SK-N-SH (cell line): ENCODE measurements at regions of chr7 and their contacts with region 1.

Region 1: GRCh38 chr7:24812310-24812945 is 55.2 kb upstream of the GSDME start:
- DNase-seq: peak; percentile 67
- H3K4me3 ChIP-seq: no peak overlapping the region; a peak in 1 of 4 replicates
- H3K27ac ChIP-seq: no peak overlapping the region
- H3K4me1 ChIP-seq: peaks cover 0 to 4% of the 10 kb centered on the region in 2 experiments; a peak in 1 of 4 replicates
- H3K27me3 ChIP-seq: no peaks in the 10 kb centered on the region
- CTCF ChIP-seq: peak; percentile 100
- EP300 ChIP-seq: no peak
- RAD21 ChIP-seq: peak; percentile 75

Region 2: GRCh38 chr7:24709585-24710360 is 102.7 kb before region 1 on chr7:
- CTCF ChIA-PET with region 1: no interaction called
- POLR2A ChIA-PET with region 1: no interaction called
- DNase-seq: no peak
- H3K4me3 ChIP-seq: no peak overlapping the region
- H3K27ac ChIP-seq: no peak overlapping the region
- H3K4me1 ChIP-seq: no peaks in the 10 kb centered on the region
- H3K27me3 ChIP-seq: no peaks in the 10 kb centered on the region
- CTCF ChIP-seq: no peak
- EP300 ChIP-seq: no peak
- RAD21 ChIP-seq: no peak

Region 3: DNA sequence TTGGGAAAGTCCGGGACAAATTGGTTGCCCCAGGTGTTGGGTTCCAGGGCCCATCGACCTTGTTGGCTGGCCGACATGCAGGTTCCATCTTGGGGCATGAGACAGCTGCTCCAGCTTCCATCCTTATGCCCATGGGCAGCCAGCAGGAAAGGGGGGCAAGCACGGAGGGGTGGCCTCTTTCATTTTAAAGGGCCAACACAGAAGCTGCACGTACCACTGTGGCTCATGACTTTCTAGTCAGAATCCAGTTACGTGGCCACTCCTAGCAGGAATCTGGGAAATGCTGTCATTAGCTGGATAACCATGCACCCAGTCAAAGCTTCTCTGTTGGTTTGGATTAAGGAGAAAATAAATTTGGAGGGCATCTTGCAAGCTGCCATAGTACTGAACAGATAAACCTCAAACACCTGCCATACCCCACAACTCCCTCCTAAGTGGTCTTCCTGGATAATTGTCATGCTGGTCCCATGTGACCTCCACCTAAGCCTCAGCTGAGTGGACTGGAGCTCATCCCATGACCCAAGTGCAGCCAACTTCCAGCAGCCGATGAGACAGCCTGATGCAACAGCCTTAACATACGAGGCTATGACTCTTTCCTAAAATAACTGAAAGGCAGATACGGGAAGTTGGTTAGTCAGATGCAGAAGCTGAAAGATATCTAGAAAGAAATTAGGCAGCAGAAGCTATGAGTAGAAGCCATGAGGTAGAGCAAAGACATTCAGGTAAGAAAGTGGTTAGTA is 33.7 kb before region 1 on chr7:
- CTCF ChIA-PET with region 1: interaction called, 13 read pairs
- POLR2A ChIA-PET with region 1: no interaction called
- DNase-seq: no peak
- H3K4me3 ChIP-seq: no peak overlapping the region
- H3K27ac ChIP-seq: peak overlapping the region in 1 of 2 experiments; percentile 45; a peak in 2 of 4 replicates
- H3K4me1 ChIP-seq: peaks cover 0 to 8% of the 10 kb centered on the region in 2 experiments; a peak in 1 of 4 replicates
- H3K27me3 ChIP-seq: no peaks in the 10 kb centered on the region
- CTCF ChIP-seq: no peak
- EP300 ChIP-seq: no peak
- RAD21 ChIP-seq: no peak

Region 4: DNA sequence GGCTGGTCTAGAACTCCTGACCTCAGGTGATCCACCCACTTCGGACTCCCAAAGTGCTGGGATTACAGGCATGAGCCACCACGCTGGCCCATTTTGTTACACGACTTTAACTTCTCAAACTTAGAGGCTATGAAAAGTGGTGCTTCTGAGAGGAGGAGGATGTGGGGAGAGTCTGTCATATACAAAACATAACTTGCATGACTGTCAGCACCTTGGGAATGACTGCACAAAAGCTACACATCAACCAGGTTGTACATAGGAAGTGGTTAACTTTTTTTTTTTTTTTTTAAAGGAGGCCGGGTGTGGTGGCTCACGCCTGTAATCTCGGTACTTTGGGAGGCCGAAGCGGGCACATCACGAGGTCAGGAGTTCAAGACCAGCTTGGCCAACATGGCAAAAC is 11.8 kb before region 1 on chr7:
- CTCF ChIA-PET with region 1: interaction called, 70 read pairs
- POLR2A ChIA-PET with region 1: no interaction called
- DNase-seq: no peak
- H3K4me3 ChIP-seq: no peak overlapping the region
- H3K27ac ChIP-seq: no peak overlapping the region
- H3K4me1 ChIP-seq: no peaks in the 10 kb centered on the region
- H3K27me3 ChIP-seq: no peaks in the 10 kb centered on the region
- CTCF ChIP-seq: no peak
- EP300 ChIP-seq: no peak
- RAD21 ChIP-seq: no peak

Region 5: DNA sequence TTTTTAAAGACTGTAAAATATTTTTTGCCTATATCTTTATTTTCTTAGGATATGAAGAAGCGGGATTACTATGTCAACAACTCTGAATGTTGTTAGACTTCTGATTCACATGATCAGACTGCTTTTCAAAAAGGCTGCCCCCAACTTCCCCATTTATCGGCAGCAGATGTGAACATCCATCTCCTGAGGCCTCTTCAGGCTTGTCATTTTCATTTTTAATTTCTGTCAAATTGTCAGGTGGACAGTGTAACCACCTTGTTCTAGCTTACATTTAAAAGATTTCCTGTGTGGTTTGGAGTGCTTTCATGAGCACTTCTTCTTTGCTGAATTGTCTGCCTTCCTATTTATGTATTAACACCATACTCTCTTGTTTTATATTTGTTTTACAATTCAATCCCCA is 23.7 kb after region 1 on chr7:
- CTCF ChIA-PET with region 1: interaction called, 14 read pairs
- POLR2A ChIA-PET with region 1: no interaction called
- DNase-seq: no peak
- H3K4me3 ChIP-seq: no peak overlapping the region
- H3K27ac ChIP-seq: no peak overlapping the region
- H3K4me1 ChIP-seq: peaks cover 0 to 22% of the 10 kb centered on the region in 2 experiments; a peak in 3 of 4 replicates
- H3K27me3 ChIP-seq: no peaks in the 10 kb centered on the region
- CTCF ChIP-seq: no peak
- EP300 ChIP-seq: no peak
- RAD21 ChIP-seq: no peak

Region 6: GRCh38 chr7:24979863-24980533 is 167.6 kb after region 1 on chr7 and contains the start of gene OSBPL3:
- CTCF ChIA-PET with region 1: interaction called, 69 read pairs
- POLR2A ChIA-PET with region 1: no interaction called
- DNase-seq: peak; percentile 100
- H3K4me3 ChIP-seq: peak within 1 kb of the TSS; percentile 73 to 97
- H3K27ac ChIP-seq: peak within 1 kb of the TSS; percentile 84 to 87
- H3K4me1 ChIP-seq: peaks cover 21 to 28% of the 10 kb centered on the region in 2 experiments; a peak in 3 of 4 replicates
- H3K27me3 ChIP-seq: no peaks in the 10 kb centered on the region
- CTCF ChIP-seq: no peak
- EP300 ChIP-seq: peak in 1 of 2 experiments; percentile 2; a peak in 1 of 4 replicates
- RAD21 ChIP-seq: peak; percentile 38
- polyA plus RNA-seq, gene OSBPL3: 22.6 and 23.2 TPM in 2 replicates

Region 7: DNA sequence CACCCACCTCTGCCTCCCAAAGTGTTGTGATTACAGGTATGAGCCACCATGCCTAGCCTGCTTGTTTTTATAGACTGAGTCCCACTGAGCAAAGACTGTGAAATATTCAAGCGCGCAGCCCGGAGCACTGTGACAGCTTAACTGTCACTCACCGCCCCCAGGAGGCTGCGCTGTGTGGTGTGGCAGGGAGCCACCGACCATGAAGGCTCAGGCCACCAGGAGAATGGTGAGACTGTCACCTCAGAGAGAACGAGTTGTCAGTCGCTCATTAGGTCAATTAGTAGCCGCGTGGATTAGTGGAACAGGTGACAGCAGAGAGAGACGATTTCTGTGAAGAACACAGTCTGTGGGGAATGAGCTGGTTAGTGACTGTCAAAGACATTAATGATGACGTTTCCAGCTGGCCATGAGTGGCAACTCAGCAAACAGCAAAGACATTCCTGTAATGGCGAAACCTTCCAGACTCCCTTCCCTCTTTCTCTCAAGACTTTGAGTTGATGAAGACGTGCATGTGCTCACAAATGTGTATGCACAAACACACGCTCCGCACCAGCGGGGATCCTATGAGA is 248.1 kb after region 1 on chr7:
- CTCF ChIA-PET with region 1: interaction called, 42 read pairs
- POLR2A ChIA-PET with region 1: no interaction called
- DNase-seq: no peak
- H3K4me3 ChIP-seq: no peak overlapping the region
- H3K27ac ChIP-seq: no peak overlapping the region
- H3K4me1 ChIP-seq: peaks cover 0 to 6% of the 10 kb centered on the region in 2 experiments; a peak in 1 of 4 replicates
- H3K27me3 ChIP-seq: no peaks in the 10 kb centered on the region
- CTCF ChIP-seq: no peak
- EP300 ChIP-seq: no peak
- RAD21 ChIP-seq: no peak

Region 8: DNA sequence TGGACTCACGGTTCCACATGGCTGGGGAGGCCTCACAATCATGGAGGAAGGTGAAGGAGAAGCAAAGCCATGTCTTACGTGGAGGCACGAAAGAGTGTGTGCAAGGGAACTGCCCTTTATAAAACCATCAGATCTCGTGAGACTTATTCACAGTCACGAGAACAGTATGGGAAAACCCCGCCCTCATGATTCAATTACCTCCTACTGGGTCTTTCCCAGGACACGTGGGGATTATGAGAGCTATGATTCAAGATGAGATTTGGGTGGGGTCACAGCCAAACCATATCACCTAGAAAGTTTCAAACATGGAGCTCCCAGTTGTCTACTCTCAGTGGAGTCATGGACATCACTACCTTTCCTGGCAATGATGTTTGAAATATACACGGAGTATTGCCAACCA is 263.0 kb after region 1 on chr7:
- CTCF ChIA-PET with region 1: interaction called, 81 read pairs
- POLR2A ChIA-PET with region 1: interaction called, 3 read pairs
- DNase-seq: no peak
- H3K4me3 ChIP-seq: no peak overlapping the region
- H3K27ac ChIP-seq: no peak overlapping the region
- H3K4me1 ChIP-seq: peaks cover 0 to 3% of the 10 kb centered on the region in 2 experiments; a peak in 1 of 4 replicates
- H3K27me3 ChIP-seq: no peaks in the 10 kb centered on the region
- CTCF ChIP-seq: no peak
- EP300 ChIP-seq: no peak
- RAD21 ChIP-seq: no peak